T-cell (primary cell): ENCODE measurements at regions of chr1 and their contacts with region 1.

Region 1: GRCh38 chr1:15788624-15789301 is 18.7 kb downstream of the UQCRHL start:
- DNase-seq: no peak
- ATAC-seq: no peak
- H3K4me3 ChIP-seq: no peak overlapping the region
- H3K4me3 Mint-ChIP-seq: no peak overlapping the region
- H3K27ac ChIP-seq: no peak overlapping the region
- H3K27ac Mint-ChIP-seq: no peak overlapping the region
- H3K4me1 ChIP-seq: peaks cover 0 to 5% of the 10 kb centered on the region in 2 experiments
- H3K4me1 Mint-ChIP-seq: peaks cover 3 to 6% (median 3%) of the 10 kb centered on the region in 3 donors
- H3K27me3 ChIP-seq: peaks cover 0 to 30% of the 10 kb centered on the region in 2 experiments
- H3K27me3 Mint-ChIP-seq: peaks cover 11 to 14% of the 10 kb centered on the region in 2 donors

Region 2: DNA sequence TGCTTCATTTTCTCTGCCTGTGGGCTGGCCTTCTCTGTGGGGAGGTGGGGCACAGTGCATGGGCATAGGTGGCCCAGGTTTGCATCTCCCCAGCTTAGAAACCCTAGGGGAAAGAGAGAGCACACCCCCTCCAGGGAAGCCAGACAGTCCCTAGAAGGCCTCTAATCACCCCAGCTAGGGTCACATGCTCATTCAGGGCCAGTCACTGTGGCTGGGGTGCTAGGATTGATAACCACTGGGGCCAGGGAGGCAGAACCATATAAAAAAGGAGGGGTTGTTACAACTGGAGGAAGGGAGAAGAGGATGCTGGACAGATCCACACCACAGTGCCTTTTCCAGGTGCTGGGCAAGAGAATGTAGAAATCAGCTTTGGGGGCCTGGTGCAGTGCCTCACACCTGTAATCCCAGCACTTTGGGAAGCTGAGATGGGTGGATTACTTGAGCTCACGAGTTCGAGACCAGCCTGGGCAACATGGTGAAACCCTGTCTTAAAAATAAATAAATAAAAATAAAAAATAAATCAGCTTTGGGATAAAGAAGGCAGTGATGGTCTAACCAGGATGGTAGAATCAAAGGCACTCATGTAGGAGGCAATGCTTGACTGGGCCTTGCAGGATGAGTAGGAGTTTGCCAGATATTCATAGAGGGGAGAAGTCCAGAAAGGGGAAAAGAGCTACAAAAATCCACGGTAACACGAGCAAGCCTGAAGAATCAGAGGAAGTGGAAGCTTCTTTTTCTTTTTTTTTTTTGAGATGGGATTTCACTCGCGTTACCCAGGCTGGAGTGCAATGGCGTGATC is 10.7 kb before region 1 on chr1:
- CTCF ChIA-PET with region 1: interaction called in 1 of 2 experiments, 5 read pairs
- POLR2A ChIA-PET with region 1: interaction called in 1 of 2 experiments, 10 read pairs
- DNase-seq: no peak
- ATAC-seq: no peak
- H3K4me3 ChIP-seq: no peak overlapping the region
- H3K4me3 Mint-ChIP-seq: no peak overlapping the region
- H3K27ac ChIP-seq: no peak overlapping the region
- H3K27ac Mint-ChIP-seq: no peak overlapping the region
- H3K4me1 ChIP-seq: no peaks in the 10 kb centered on the region
- H3K4me1 Mint-ChIP-seq: no peaks in the 10 kb centered on the region
- H3K27me3 ChIP-seq: peaks cover 0 to 16% of the 10 kb centered on the region in 2 experiments
- H3K27me3 Mint-ChIP-seq: peaks cover 0 to 2% of the 10 kb centered on the region in 2 donors